ENCODE measurements at regions of chr17 and their contacts with region 1.

Region 1: GRCh38 chr17:18183334-18184142 is at the start of gene ALKBH5:
- DNase-seq: peak; percentile 93 to 99 (median 96)
- ATAC-seq: peak; percentile 80
- H3K4me3 ChIP-seq: peak within 1 kb of the TSS; percentile 88
- H3K4me3 Mint-ChIP-seq: peak within 1 kb of the TSS; percentile 98
- H3K27ac ChIP-seq: peak within 1 kb of the TSS; percentile 92 to 98
- H3K27ac Mint-ChIP-seq: peak within 1 kb of the TSS; percentile 97
- H3K4me1 ChIP-seq: peaks cover 56% of the 10 kb centered on the region
- H3K4me1 Mint-ChIP-seq: peaks cover 59% of the 10 kb centered on the region
- H3K27me3 ChIP-seq: no peaks in the 10 kb centered on the region
- H3K27me3 Mint-ChIP-seq: no peaks in the 10 kb centered on the region
- CTCF ChIP-seq: peak; percentile 29
- total RNA-seq, gene ALKBH5: 117 to 119 TPM

Region 2: GRCh38 chr17:17591355-17592298 is 591.9 kb before region 1 on chr17 and contains the start of gene PEMT:
- CTCF ChIA-PET with region 1: no interaction called
- POLR2A ChIA-PET with region 1: interaction called, 3 read pairs
- intact Hi-C with region 1: loop called in 1 of 2 experiments (anchors 5 kb)
- DNase-seq: peak; percentile 84 to 98 (median 91)
- ATAC-seq: peak; percentile 87
- H3K4me3 ChIP-seq: peak within 1 kb of the TSS; percentile 64
- H3K4me3 Mint-ChIP-seq: peak within 1 kb of the TSS; percentile 89
- H3K27ac ChIP-seq: peak within 1 kb of the TSS; percentile 81 to 85
- H3K27ac Mint-ChIP-seq: peak within 1 kb of the TSS; percentile 92
- H3K4me1 ChIP-seq: peaks cover 25% of the 10 kb centered on the region
- H3K4me1 Mint-ChIP-seq: peaks cover 21% of the 10 kb centered on the region
- H3K27me3 ChIP-seq: no peaks in the 10 kb centered on the region
- H3K27me3 Mint-ChIP-seq: no peaks in the 10 kb centered on the region
- CTCF ChIP-seq: no peak
- total RNA-seq, gene PEMT: 11.4 to 12.0 TPM

Region 3: GRCh38 chr17:18087610-18088491 is 95.7 kb before region 1 on chr17 and contains the start of gene DRG2:
- CTCF ChIA-PET with region 1: interaction called, 3 read pairs
- POLR2A ChIA-PET with region 1: interaction called, 4 read pairs
- intact Hi-C with region 1: loop called in 1 of 2 experiments (anchors 1 kb)
- DNase-seq: peak; percentile 79 to 94 (median 84)
- ATAC-seq: peak; percentile 92
- H3K4me3 ChIP-seq: peak within 1 kb of the TSS; percentile 79
- H3K4me3 Mint-ChIP-seq: peak within 1 kb of the TSS; percentile 100
- H3K27ac ChIP-seq: peak within 1 kb of the TSS; percentile 80
- H3K27ac Mint-ChIP-seq: peak within 1 kb of the TSS; percentile 97
- H3K4me1 ChIP-seq: peaks cover 27% of the 10 kb centered on the region
- H3K4me1 Mint-ChIP-seq: peaks cover 32% of the 10 kb centered on the region
- H3K27me3 ChIP-seq: no peaks in the 10 kb centered on the region
- H3K27me3 Mint-ChIP-seq: no peaks in the 10 kb centered on the region
- CTCF ChIP-seq: no peak
- total RNA-seq, gene DRG2: 38.9 to 40.6 TPM

Region 4: GRCh38 chr17:18158022-18158600 is 25.4 kb before region 1 on chr17:
- CTCF ChIA-PET with region 1: no interaction called
- POLR2A ChIA-PET with region 1: interaction called, 17 read pairs
- intact Hi-C with region 1: loop called (anchors 1 kb)
- DNase-seq: peak; percentile 90 to 98 (median 94)
- ATAC-seq: peak; percentile 93
- H3K4me3 ChIP-seq: peak overlapping the region; percentile 62
- H3K4me3 Mint-ChIP-seq: peak overlapping the region; percentile 85
- H3K27ac ChIP-seq: peak overlapping the region; percentile 36 to 61
- H3K27ac Mint-ChIP-seq: peak overlapping the region; percentile 81
- H3K4me1 ChIP-seq: peaks cover 25% of the 10 kb centered on the region
- H3K4me1 Mint-ChIP-seq: peaks cover 26% of the 10 kb centered on the region
- H3K27me3 ChIP-seq: no peaks in the 10 kb centered on the region
- H3K27me3 Mint-ChIP-seq: no peaks in the 10 kb centered on the region
- CTCF ChIP-seq: no peak

Region 5: GRCh38 chr17:18217412-18218015 is 34.0 kb after region 1 on chr17:
- CTCF ChIA-PET with region 1: interaction called, 5 read pairs
- POLR2A ChIA-PET with region 1: interaction called, 3 read pairs
- intact Hi-C with region 1: loop called in 1 of 2 experiments (anchors 5 kb)
- DNase-seq: peak; percentile 53 to 82 (median 66)
- ATAC-seq: peak; percentile 97
- H3K4me3 ChIP-seq: no peak overlapping the region
- H3K4me3 Mint-ChIP-seq: no peak overlapping the region
- H3K27ac ChIP-seq: no peak overlapping the region
- H3K27ac Mint-ChIP-seq: no peak overlapping the region
- H3K4me1 ChIP-seq: no peaks in the 10 kb centered on the region
- H3K4me1 Mint-ChIP-seq: no peaks in the 10 kb centered on the region
- H3K27me3 ChIP-seq: no peaks in the 10 kb centered on the region
- H3K27me3 Mint-ChIP-seq: no peaks in the 10 kb centered on the region
- CTCF ChIP-seq: peak; percentile 89

Region 6: DNA sequence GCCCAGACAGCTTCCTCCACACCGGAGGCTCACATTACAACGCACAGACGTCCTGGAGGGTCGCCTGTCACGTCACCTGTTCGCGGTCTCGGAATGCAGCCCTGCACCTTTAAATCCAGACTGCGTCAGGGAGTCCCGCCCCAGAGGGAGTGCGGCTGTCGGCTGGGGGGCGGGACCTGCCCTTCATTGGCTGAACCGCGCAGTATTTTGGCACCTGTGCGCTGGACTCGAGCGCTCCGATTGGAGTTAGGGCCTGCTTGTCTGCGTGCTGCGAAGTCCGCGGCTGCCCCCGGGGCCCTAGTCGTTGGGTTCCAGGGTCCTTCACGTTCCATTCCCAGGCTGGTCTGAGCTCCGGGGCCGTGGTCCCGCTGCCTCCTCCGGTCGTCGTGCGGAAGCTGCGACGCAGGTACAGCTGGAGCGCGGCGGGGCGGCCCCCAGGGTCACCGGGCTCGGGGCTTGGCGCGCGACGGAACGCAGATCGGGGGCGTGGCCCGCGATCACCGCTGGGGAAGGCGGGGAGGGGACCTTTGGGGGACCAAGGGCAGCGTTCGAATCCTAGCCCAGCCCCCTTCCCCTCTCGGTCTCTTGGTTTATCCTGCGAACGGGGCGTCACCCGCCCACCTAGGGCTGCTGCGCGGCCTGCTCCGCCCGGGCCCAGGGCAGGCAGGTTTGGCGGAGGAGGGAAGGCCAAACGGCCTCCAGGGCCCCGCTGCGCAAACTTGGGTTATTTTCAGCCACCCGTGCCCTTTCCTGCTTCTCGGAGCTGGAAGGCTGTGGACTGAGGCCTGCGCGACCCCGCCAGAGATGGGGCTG is 77.0 kb after region 1 on chr17 and contains the start of gene MIEF2:
- CTCF ChIA-PET with region 1: no interaction called
- POLR2A ChIA-PET with region 1: interaction called, 9 read pairs
- intact Hi-C with region 1: loop called in 1 of 2 experiments (anchors 2 kb)
- DNase-seq: peak; percentile 83 to 95 (median 90)
- ATAC-seq: peak; percentile 91
- H3K4me3 ChIP-seq: peak within 1 kb of the TSS; percentile 78
- H3K4me3 Mint-ChIP-seq: peak within 1 kb of the TSS; percentile 93
- H3K27ac ChIP-seq: peak within 1 kb of the TSS; percentile 82 to 85
- H3K27ac Mint-ChIP-seq: peak within 1 kb of the TSS; percentile 90
- H3K4me1 ChIP-seq: peaks cover 65% of the 10 kb centered on the region
- H3K4me1 Mint-ChIP-seq: peaks cover 48% of the 10 kb centered on the region
- H3K27me3 ChIP-seq: no peaks in the 10 kb centered on the region
- H3K27me3 Mint-ChIP-seq: no peaks in the 10 kb centered on the region
- CTCF ChIP-seq: no peak
- total RNA-seq, gene MIEF2: 10.7 to 14.3 TPM